Left ventricle myocardium superior (tissue), 1 donor: ENCODE measurements at regions of chr14 and their contacts with region 1.

Region 1: DNA sequence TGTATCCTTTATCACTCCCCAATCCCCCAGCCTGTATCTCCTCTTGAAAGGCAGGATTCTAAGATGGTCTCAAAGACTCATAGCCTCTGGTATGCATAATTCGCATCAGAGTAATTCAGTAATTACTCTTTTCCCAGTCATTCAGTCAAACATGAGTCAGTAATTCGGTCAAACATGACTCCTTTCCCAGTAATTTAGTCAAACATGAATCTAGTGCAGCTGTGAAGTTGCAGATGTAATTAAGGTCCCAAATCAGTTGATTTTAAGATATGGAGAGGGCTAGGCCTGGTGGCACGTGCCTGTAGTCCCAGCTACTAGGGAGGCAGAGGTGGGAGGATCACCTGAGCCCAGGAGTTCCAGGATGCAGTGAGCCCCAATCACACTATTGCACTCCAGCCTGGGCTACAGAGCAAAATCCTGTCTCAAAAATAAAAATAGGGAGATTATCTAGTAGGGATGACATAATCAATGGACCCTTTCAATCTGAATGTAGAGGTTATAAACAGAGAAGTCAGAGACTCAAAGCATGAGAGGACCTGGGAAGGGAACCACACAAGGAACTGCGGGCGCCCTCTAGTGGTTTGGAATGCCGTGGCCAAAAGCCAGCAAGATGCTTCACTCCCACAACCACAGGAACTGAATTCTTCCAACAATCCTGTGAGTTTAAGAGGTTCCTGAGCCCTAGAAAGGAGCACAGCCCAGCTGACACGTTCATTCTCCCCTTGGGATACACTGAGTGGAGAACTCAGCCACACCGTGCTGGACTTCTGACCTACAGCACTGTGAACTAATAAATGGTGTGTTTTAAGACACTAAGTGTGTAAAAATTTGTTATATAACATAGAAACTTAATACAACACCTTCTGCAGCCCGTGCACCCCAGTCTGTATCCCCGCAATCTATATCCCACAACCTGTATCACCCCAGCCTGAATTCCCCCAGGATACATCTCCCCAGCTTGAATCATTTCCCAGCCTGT is 14.3 kb upstream of the ARMH4 start:
- DNase-seq: peak; percentile 90
- ATAC-seq: peak; percentile 78

Region 2: GRCh38 chr14:58107947-58108552 is 58.2 kb before region 1 on chr14:
- intact Hi-C with region 1: loop called (anchors 2 kb)
- DNase-seq: no peak
- ATAC-seq: no peak